Sigmoid colon (tissue), 7 donors: ENCODE measurements at regions of chr2 and their contacts with region 1.

Region 1: DNA sequence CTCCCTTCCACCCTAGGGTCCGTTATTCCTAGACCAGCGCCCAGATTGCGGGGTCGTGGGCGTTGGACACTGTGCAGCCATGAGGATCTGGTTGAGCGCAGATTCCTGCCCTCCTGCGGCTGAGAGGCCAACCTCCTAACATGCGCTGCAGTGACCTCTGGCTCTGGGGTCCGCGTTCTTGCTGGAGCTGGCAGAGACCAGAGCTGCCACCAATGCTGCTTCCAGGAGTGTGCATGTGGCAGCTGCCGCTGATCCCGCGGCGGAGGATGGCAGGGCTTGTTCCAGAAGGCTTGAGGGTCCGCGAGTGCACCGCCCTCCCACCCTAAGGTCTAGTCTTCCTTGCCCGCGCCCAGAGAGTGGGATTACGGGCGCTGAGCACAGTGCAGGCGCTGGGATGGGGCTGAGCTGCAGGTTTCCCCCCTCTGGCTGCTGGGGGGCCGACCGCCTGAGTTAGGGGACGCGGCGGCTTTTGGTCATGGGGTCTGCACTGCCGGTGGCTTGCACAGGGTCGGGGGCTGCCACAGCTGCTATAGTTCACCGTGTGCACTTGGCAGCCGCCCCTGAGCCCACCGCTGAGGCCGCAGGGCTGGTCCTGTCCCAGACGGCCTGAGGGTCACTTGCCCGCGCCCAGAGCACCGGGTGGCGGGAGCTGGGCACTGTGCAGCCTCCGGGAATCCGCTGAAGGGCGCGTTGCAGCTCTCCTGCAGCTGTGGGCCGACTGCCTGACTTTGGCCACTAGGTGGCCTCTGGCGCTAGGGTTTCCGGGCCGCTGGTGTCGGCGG is 145.9 kb downstream of the CCDC74A start:
- DNase-seq: peak; percentile 85
- H3K4me3 ChIP-seq: peak overlapping the region in 3 of 4 donors; percentile 31 to 45 (median 38)
- H3K27ac ChIP-seq: no peak overlapping the region
- H3K4me1 ChIP-seq: peaks cover 0 to 29% (median 22%) of the 10 kb centered on the region in 4 donors
- H3K27me3 ChIP-seq: peaks cover 0 to 10% (median 0%) of the 10 kb centered on the region in 3 donors
- CTCF ChIP-seq: peak in 3 of 4 experiments; percentile 70 to 95 (median 81)
- EP300 ChIP-seq: no peak
- POLR2A ChIP-seq: no peak

Region 2: GRCh38 chr2:131076707-131077106 is 596.9 kb before region 1 on chr2:
- intact Hi-C with region 1: no loop called
- DNase-seq: no peak
- H3K4me3 ChIP-seq: no peak overlapping the region
- H3K27ac ChIP-seq: no peak overlapping the region
- H3K4me1 ChIP-seq: peaks cover 0 to 23% (median 13%) of the 10 kb centered on the region in 4 donors
- H3K27me3 ChIP-seq: no peaks in the 10 kb centered on the region
- CTCF ChIP-seq: no peak
- EP300 ChIP-seq: no peak
- POLR2A ChIP-seq: no peak

Region 3: GRCh38 chr2:131349021-131349420 is 324.6 kb before region 1 on chr2:
- intact Hi-C with region 1: no loop called
- DNase-seq: no peak
- H3K4me3 ChIP-seq: no peak overlapping the region
- H3K27ac ChIP-seq: no peak overlapping the region
- H3K4me1 ChIP-seq: no peaks in the 10 kb centered on the region
- H3K27me3 ChIP-seq: peaks cover 0 to 11% (median 2%) of the 10 kb centered on the region in 3 donors
- CTCF ChIP-seq: no peak
- EP300 ChIP-seq: no peak
- POLR2A ChIP-seq: no peak

Region 4: DNA sequence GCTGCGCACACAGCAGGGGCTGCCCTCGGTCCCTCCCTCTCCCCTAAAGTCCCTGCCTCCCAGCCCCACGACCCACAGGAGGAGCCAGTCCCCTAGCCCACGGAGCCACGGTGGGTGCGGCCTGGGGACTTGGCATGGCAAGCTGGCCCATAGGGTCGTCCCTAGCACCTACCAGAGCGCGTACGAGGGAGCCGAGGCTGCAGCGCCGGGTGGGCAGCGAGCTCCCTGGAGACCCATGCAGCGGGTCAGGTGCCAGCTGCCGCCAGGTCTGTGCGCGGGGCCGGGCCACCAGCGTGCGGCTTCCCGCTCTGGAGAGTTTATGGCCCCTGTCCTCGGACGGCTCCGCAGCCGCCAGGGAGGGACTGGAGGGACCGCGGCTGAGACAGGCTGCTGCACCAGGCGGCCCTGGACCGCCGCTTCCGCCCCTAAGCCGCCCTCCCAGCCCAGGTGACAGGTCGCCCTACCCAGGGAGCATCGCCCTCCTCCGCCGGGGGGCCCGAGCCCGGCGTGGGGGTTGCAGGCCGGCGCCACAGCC is 127.7 kb after region 1 on chr2:
- intact Hi-C with region 1: loop called (anchors 2 kb)
- DNase-seq: no peak
- H3K4me3 ChIP-seq: peak overlapping the region in 3 of 4 donors; percentile 26 to 47 (median 46)
- H3K27ac ChIP-seq: no peak overlapping the region
- H3K4me1 ChIP-seq: peaks cover 0 to 16% (median 14%) of the 10 kb centered on the region in 4 donors
- H3K27me3 ChIP-seq: no peaks in the 10 kb centered on the region
- CTCF ChIP-seq: no peak
- EP300 ChIP-seq: no peak
- POLR2A ChIP-seq: no peak

Region 5: DNA sequence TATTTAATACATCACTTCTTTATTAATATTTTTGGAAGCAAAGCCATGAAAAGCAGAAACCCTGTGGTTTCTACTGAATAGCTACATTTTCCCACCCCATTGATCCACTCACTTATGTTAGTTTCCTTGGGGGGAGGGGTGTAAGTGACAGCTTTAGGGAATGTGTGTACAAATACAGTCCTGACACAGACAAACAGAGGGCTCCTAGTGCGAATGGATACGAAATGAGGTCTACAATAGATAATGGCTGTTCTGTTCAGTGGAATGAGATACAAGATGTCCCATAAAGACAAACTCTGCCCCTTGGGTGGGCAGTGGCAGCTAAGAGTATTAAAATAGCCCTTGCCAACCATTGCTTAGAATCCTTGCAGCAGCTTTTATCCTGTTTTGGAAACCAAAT is 1581.8 kb after region 1 on chr2:
- intact Hi-C with region 1: no loop called
- DNase-seq: no peak
- H3K4me3 ChIP-seq: no peak overlapping the region
- H3K27ac ChIP-seq: no peak overlapping the region
- H3K4me1 ChIP-seq: no peaks in the 10 kb centered on the region
- H3K27me3 ChIP-seq: no peaks in the 10 kb centered on the region
- CTCF ChIP-seq: no peak
- EP300 ChIP-seq: no peak
- POLR2A ChIP-seq: no peak